ENCODE measurements at regions of chr22 and their contacts with region 1.

Region 1: GRCh38 chr22:29603358-29604075 is at the start of gene NF2:
- DNase-seq: peak; percentile 99
- ATAC-seq: peak; percentile 97
- H3K4me3 Mint-ChIP-seq: peak within 1 kb of the TSS; percentile 92
- H3K27ac Mint-ChIP-seq: peak within 1 kb of the TSS; percentile 97
- H3K4me1 Mint-ChIP-seq: peaks cover 29% of the 10 kb centered on the region
- H3K27me3 Mint-ChIP-seq: no peaks in the 10 kb centered on the region
- total RNA-seq, gene NF2: 40.2 to 43.1 TPM

Region 2: DNA sequence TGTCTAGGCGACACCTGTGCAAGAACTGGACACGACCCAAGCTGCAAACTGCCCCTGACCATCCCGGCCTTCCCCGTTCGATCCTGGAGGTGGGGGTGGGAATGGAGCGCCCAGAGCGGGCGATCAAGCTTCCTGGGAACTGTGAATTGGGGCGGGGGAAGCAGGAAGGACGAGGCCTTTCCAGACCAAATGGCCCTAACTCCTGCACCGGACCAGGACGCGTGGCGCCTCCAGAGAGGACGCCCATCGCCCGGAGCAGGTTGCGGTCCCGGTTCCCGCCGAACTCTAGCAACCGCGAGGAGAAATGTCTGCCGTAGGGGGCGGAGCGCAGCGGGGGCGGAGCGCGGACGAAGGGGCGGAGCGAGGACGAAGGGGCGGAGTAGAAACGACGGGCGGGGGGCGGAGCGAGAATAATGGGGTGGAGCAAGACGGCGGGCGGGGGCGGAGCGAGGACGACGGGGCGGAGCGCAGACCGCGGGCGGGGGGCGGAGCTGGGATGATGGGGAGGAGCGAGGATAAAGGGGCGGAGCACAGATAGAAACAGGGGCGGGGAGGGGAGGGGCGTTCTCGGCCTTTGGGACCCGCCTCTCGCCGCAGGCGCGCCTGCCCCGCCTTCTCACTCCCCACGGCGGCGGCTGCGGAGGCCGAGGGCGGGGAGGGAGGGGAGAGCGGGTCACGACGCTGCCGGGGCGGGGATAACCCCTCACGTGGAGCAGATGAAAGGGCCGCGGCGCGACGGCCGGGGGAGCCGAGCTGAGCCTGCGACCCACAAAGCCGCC is 720.5 kb before region 1 on chr22 and contains the start of gene ZNRF3:
- CTCF ChIA-PET with region 1: no interaction called
- POLR2A ChIA-PET with region 1: no interaction called
- intact Hi-C with region 1: loop called in 1 of 2 experiments (anchors 10 kb)
- DNase-seq: peak; percentile 96
- ATAC-seq: peak; percentile 91
- H3K4me3 Mint-ChIP-seq: peak within 1 kb of the TSS; percentile 75
- H3K27ac Mint-ChIP-seq: peak within 1 kb of the TSS; percentile 83
- H3K4me1 Mint-ChIP-seq: peaks cover 18% of the 10 kb centered on the region
- H3K27me3 Mint-ChIP-seq: peaks cover 26% of the 10 kb centered on the region
- total RNA-seq, gene ZNRF3: 2.3 TPM

Region 3: GRCh38 chr22:29553351-29554224 is 49.9 kb before region 1 on chr22 and contains the start of gene THOC5:
- CTCF ChIA-PET with region 1: no interaction called
- POLR2A ChIA-PET with region 1: interaction called, 9 read pairs
- intact Hi-C with region 1: loop called in 1 of 2 experiments (anchors 1 kb)
- DNase-seq: peak; percentile 94
- ATAC-seq: peak; percentile 99
- H3K4me3 Mint-ChIP-seq: peak within 1 kb of the TSS; percentile 96
- H3K27ac Mint-ChIP-seq: peak within 1 kb of the TSS; percentile 92
- H3K4me1 Mint-ChIP-seq: peaks cover 13% of the 10 kb centered on the region
- H3K27me3 Mint-ChIP-seq: no peaks in the 10 kb centered on the region
- total RNA-seq, gene THOC5: 52.4 to 65.7 TPM

Region 4: DNA sequence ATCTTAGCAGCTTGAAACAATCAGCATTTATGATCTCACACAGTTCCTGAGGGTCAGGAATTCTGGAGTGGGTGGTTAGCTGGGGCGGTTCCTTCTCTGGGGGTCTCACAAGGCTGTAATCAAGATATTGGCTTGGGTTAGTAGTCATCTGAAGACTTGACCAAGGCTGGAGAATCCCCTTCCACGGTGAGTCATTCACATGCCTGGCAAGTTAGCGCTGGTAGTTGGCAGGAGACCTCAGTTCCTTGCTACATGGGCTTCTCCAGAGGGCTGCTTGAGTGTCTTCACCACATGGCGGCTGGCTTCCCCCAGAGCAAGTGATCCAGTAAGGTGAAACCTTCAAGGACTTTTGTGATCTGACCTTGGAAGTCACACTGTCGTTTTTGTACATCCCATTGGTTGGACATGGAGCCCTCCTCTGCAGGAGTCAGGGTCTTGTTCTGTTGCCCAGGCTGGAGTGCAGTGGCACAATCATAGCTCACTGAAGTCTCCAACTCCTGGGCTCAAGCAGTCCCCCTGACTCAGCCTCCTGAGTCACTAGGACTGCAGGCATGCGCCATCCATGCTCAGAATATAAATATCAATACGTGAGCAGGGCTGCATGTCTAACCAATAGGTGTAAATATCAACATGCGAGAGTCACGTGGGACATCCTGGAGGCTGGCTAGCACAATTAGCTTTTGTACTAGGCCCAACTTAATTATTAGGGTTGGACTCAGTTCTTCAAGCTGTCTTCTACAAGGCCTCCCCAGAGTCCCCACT is 15.4 kb before region 1 on chr22:
- CTCF ChIA-PET with region 1: interaction called, 20 read pairs
- POLR2A ChIA-PET with region 1: interaction called, 5 read pairs
- intact Hi-C with region 1: no loop called
- DNase-seq: no peak
- ATAC-seq: no peak
- H3K4me3 Mint-ChIP-seq: no peak overlapping the region
- H3K27ac Mint-ChIP-seq: no peak overlapping the region
- H3K4me1 Mint-ChIP-seq: peaks cover 8% of the 10 kb centered on the region
- H3K27me3 Mint-ChIP-seq: no peaks in the 10 kb centered on the region

Region 5: DNA sequence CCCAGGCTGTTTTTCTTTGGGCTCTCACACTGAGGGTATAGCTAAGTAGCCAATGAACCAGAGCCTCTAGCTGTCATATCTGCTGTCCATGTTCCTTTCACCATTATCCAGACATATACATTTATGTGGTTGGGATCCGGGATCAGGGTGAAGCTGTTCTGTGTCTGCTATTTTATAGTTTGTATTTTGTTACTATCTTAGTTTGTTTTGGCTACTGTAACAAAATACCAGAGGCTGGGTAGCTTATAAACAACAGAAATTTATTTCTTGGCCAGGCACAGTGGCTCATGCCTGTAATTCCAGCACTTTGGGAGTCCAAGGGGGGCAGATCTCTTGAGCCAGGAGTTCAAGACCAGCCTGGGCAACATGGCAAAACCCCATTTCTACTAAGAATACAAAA is 75.8 kb after region 1 on chr22:
- CTCF ChIA-PET with region 1: no interaction called
- POLR2A ChIA-PET with region 1: no interaction called
- intact Hi-C with region 1: no loop called
- DNase-seq: no peak
- ATAC-seq: no peak
- H3K4me3 Mint-ChIP-seq: no peak overlapping the region
- H3K27ac Mint-ChIP-seq: no peak overlapping the region
- H3K4me1 Mint-ChIP-seq: no peaks in the 10 kb centered on the region
- H3K27me3 Mint-ChIP-seq: no peaks in the 10 kb centered on the region

Region 6: DNA sequence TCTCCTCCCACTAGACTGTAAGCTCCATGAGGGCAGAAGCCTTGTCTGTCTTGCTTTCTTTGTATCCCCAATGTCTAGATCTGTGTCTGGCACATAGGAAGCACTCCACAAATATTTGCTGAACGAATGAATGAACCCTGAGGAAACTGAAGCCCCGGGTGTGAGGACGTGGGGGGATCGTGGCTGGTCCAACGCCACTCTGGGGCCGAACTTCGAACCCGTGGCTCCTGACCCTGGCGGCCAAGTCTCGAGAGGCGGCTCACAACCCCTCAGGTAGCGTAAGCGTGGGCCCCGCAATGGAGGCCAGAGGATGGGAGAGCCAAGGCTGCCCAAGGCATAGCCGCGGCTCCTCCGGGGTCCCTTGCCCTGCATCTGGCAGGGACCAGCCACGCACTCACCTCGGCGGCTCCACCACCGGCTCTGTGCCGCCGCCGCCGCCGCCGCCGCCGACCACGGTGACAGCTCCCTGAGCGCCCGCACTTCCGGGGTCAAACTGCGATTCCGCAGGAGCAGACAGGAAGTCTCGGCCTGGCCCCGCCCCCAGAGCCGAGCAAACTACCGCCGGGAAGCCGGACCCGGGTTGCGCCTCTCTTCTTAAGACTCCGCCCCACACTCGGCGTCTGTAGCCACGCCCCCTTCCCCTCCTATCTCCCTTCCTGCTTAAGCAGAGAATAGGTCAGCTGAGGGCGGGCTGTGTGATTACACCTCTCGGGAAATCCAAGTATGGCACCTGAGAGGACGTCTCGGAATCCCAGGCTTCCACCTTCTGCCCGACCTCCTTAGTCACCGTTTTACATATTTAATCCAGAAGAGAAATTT is 234.5 kb after region 1 on chr22 and contains the start of gene ASCC2:
- CTCF ChIA-PET with region 1: no interaction called
- POLR2A ChIA-PET with region 1: no interaction called
- intact Hi-C with region 1: loop called (anchors 1 to 5 kb)
- DNase-seq: peak; percentile 100
- ATAC-seq: peak; percentile 99
- H3K4me3 Mint-ChIP-seq: peak within 1 kb of the TSS; percentile 99
- H3K27ac Mint-ChIP-seq: peak within 1 kb of the TSS; percentile 97
- H3K4me1 Mint-ChIP-seq: peaks cover 36% of the 10 kb centered on the region
- H3K27me3 Mint-ChIP-seq: no peaks in the 10 kb centered on the region
- total RNA-seq, gene ASCC2: 56.0 to 69.9 TPM

Region 7: GRCh38 chr22:30262917-30263741 is 659.6 kb after region 1 on chr22:
- CTCF ChIA-PET with region 1: no interaction called
- POLR2A ChIA-PET with region 1: no interaction called
- intact Hi-C with region 1: loop called in 1 of 2 experiments (anchors 10 kb)
- DNase-seq: peak; percentile 88
- ATAC-seq: no peak
- H3K4me3 Mint-ChIP-seq: peak overlapping the region; percentile 62
- H3K27ac Mint-ChIP-seq: peak overlapping the region; percentile 51
- H3K4me1 Mint-ChIP-seq: peaks cover 33% of the 10 kb centered on the region
- H3K27me3 Mint-ChIP-seq: no peaks in the 10 kb centered on the region